CD8-positive, alpha-beta T cell (primary cell): ENCODE measurements at regions of chr7 and their contacts with region 1.

Region 1: GRCh38 chr7:73515178-73515577 is 6.9 kb downstream of the BAZ1B start:
- DNase-seq: peak in 1 of 9 experiments; percentile 36
- ATAC-seq: peak; percentile 42
- H3K4me3 ChIP-seq: no peak overlapping the region
- H3K4me3 Mint-ChIP-seq: no peak overlapping the region
- H3K27ac ChIP-seq: no peak overlapping the region
- H3K27ac Mint-ChIP-seq: peak overlapping the region; percentile 43
- H3K4me1 ChIP-seq: peaks cover 22% of the 10 kb centered on the region
- H3K4me1 Mint-ChIP-seq: peaks cover 59% of the 10 kb centered on the region
- H3K27me3 ChIP-seq: no peaks in the 10 kb centered on the region
- H3K27me3 Mint-ChIP-seq: no peaks in the 10 kb centered on the region
- CTCF ChIP-seq: no peak

Region 2: DNA sequence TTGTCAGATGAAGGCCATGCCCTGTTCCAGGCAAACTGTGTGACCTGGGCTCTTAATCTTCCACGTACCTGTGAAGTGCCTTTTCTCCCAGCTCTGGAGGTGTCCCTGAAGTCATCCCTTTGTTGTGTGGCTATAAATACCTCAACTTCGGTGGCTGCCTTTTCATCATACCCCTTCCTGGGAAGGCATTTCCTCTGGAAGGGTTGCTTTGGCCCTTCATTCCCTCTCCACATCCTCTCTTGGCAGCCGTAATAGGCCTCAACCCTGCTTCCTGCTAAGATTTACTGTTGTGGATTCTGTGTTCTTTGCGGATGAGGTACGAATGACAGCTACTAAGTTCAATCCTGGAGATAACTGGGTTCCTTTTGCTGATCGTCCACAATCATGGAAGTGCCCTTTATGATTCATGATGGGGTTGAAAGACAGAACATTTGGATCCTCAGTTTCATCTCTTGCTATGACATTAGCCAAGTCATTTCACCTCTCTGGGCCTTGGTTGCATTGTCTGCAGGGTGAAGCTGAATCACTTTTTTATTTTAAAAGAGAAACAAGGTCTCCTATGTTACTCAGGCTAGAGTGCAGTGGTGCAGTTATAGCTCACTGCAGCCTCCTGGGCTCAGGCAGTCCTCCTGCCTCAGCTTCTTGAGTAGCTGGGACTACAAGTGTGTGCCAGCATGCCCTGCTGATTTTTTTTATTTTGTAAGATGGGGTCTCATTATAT is 163.6 kb before region 1 on chr7:
- CTCF ChIA-PET with region 1: no interaction called
- POLR2A ChIA-PET with region 1: no interaction called
- intact Hi-C with region 1: no loop called
- DNase-seq: no peak
- ATAC-seq: no peak
- H3K4me3 ChIP-seq: no peak overlapping the region
- H3K4me3 Mint-ChIP-seq: no peak overlapping the region
- H3K27ac ChIP-seq: no peak overlapping the region
- H3K27ac Mint-ChIP-seq: no peak overlapping the region
- H3K4me1 ChIP-seq: no peaks in the 10 kb centered on the region
- H3K4me1 Mint-ChIP-seq: no peaks in the 10 kb centered on the region
- H3K27me3 ChIP-seq: no peaks in the 10 kb centered on the region
- H3K27me3 Mint-ChIP-seq: no peaks in the 10 kb centered on the region
- CTCF ChIP-seq: no peak

Region 3: GRCh38 chr7:73477376-73477775 is 37.8 kb before region 1 on chr7:
- CTCF ChIA-PET with region 1: no interaction called
- POLR2A ChIA-PET with region 1: no interaction called
- intact Hi-C with region 1: loop called in 1 of 2 experiments (anchors 5 kb)
- DNase-seq: no peak
- ATAC-seq: no peak
- H3K4me3 ChIP-seq: no peak overlapping the region
- H3K4me3 Mint-ChIP-seq: no peak overlapping the region
- H3K27ac ChIP-seq: no peak overlapping the region
- H3K27ac Mint-ChIP-seq: no peak overlapping the region
- H3K4me1 ChIP-seq: no peaks in the 10 kb centered on the region
- H3K4me1 Mint-ChIP-seq: peaks cover 31% of the 10 kb centered on the region
- H3K27me3 ChIP-seq: no peaks in the 10 kb centered on the region
- H3K27me3 Mint-ChIP-seq: no peaks in the 10 kb centered on the region
- CTCF ChIP-seq: no peak

Region 4: GRCh38 chr7:73487486-73487885 is 27.7 kb before region 1 on chr7:
- CTCF ChIA-PET with region 1: no interaction called
- POLR2A ChIA-PET with region 1: no interaction called
- intact Hi-C with region 1: loop called in 1 of 2 experiments (anchors 1 kb)
- DNase-seq: no peak
- ATAC-seq: no peak
- H3K4me3 ChIP-seq: no peak overlapping the region
- H3K4me3 Mint-ChIP-seq: no peak overlapping the region
- H3K27ac ChIP-seq: no peak overlapping the region
- H3K27ac Mint-ChIP-seq: peak overlapping the region; percentile 7
- H3K4me1 ChIP-seq: no peaks in the 10 kb centered on the region
- H3K4me1 Mint-ChIP-seq: peaks cover 9% of the 10 kb centered on the region
- H3K27me3 ChIP-seq: no peaks in the 10 kb centered on the region
- H3K27me3 Mint-ChIP-seq: no peaks in the 10 kb centered on the region
- CTCF ChIP-seq: no peak